ENCODE measurements at regions of chr6 and their contacts with region 1.

Region 1: DNA sequence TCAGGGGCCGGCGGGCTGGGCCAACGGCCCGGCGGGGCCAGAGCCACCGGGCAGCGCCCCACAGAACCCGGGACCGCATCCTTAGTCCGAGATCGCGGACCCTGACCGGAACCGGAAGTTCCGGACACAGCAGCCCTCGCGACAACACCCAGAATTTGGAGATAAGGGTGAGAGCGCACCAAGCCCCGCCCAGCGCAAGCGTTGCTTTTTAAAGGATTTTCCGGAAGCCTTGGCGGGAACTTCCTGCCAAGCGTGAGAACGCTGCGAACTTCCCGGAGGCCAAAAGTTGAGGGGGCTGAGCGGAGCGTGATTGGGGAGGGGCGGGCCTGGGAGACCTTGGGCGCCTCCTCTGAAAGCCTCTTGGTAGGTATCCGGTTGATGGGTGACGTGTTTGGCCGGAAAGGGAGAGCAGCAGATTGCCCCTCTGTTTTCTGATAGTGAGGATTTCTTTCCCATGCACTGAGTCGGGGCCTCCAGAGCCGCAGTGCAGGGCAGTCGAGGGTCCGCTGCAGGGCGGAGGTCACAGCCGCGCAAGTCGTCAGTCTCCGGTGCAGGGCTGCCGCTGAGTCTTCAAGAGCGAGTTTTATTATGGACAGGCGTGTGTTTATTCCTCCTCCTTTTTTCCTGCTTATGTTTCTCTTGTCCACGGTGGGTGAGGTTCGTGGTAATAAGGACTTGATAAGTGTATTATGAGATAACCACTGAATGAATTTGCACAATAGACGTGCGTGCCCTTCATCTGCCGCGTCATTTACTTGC is at the start of gene MTRF1L:
- DNase-seq: peak; percentile 81 to 99 (median 90)

Region 2: DNA sequence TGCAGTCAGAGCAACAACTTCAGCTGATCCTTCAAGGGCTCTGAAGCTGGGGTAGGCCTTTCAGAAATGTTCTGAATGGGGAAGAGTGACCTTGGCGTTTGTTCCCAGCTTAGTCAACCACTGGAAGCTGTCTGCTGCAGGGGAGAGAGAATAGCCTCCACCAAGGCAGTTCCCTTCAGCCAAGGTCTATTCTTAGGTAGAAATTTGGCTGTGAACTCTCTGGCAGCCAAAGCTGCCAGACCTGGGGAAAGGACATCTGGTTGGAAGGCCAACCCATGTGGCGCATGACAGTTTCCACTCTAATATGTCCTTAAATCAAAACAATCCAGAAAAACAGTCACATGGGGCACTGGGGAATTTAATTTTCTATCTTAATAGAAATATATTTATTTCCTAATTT is 80.1 kb before region 1 on chr6:
- intact Hi-C with region 1: no loop called
- DNase-seq: no peak

Region 3: DNA sequence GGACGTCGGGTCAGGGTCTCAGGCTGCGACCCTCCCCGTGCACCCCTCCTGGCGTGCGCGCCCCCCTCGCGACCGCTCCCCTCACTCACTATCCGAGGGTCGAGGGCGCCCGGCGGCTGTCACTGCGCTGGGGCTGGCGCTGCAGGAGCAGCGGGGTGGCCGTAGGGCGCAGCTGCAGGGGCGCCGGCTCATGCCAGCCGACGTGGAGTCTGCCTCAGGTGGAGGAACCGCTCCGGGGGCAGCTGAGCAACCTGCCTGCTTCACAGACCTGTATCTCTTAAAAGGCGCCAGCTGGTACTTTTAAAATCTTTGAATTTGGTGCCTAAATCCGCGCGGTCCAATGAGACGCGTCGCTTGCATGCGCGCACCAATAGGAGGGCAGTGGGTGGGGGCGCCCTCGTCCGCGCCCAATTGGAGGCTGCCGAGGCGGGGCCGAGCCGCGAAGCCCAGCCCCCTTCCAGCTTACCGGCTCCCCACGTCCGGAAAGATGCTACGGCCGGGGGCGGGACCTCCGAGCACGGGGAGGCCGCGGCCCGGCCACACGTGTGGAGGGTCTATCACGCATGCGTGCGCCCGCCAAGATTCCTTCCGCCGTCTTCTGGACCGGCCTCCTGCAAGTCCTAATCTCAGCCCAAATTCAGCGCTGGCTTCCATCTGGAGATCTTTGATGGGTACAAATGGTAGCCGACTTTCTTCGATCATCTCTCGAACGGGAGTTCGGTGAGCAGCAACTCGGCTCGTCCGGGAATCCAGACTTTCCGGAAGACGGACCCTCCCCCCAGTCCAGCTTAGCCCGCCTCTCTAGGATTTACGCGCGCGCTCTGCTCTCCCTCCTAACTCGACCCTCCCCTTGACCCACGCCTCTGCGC is 19.8 kb before region 1 on chr6 and contains the start of gene FBXO5:
- intact Hi-C with region 1: loop called (anchors 2 kb)
- DNase-seq: peak; percentile 90 to 100 (median 96)

Measured in posterior cingulate gyrus (tissue), 11 donors.